ENCODE measurements at regions of chr17 and their contacts with region 1.

Region 1: DNA sequence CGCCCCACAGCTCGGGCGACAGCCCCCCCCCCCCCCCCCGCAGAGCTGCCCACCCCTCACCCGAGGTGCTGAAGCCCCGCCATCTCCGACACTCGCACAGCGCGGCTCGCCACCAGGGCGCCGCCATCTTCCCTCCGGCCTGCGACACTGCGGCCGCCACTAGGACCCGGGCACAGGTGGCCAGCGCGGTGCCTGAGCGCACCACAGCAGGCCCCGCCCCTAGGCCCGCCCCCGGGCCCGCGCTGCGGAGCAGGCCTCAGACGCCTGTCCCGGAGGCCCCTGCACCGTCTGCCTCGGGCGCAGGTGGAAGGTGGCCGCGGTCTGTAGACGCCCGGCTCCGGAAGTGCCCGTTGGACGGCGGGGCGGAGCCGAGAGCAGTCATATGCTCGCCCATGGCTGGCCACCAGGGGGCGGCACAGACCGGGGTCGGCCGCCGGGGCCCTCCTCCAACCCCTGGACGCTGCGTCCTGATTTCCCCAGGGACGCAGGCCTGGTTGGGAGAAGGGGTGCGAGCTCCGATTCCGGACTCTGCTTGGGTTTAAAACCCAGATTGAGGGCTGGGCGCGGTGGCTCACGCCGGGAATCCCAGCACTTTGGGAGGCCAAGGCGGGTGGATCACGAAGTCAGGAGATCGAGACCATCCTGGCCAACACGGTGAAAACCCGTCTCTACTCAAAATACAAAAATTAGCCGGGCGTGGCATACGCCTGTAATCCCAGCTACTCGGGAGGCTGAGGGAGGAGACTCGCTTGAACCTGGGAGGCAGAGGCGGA is at the start of gene MRPL38:
- DNase-seq: peak; percentile 97 to 98
- H3K4me3 ChIP-seq: peak within 1 kb of the TSS; percentile 50 to 86 (median 72)
- H3K27ac ChIP-seq: peak within 1 kb of the TSS; percentile 84 to 97 (median 95)
- H3K4me1 ChIP-seq: peaks cover 28 to 37% of the 10 kb centered on the region in 2 donors
- H3K27me3 ChIP-seq: no peaks in the 10 kb centered on the region
- CTCF ChIP-seq: peak; percentile 94 to 100 (median 97)
- POLR2A ChIP-seq: peak in 1 of 2 donors; percentile 88
- total RNA-seq, gene MRPL38: 34.8 to 60.6 (median 50.3) TPM

Region 2: DNA sequence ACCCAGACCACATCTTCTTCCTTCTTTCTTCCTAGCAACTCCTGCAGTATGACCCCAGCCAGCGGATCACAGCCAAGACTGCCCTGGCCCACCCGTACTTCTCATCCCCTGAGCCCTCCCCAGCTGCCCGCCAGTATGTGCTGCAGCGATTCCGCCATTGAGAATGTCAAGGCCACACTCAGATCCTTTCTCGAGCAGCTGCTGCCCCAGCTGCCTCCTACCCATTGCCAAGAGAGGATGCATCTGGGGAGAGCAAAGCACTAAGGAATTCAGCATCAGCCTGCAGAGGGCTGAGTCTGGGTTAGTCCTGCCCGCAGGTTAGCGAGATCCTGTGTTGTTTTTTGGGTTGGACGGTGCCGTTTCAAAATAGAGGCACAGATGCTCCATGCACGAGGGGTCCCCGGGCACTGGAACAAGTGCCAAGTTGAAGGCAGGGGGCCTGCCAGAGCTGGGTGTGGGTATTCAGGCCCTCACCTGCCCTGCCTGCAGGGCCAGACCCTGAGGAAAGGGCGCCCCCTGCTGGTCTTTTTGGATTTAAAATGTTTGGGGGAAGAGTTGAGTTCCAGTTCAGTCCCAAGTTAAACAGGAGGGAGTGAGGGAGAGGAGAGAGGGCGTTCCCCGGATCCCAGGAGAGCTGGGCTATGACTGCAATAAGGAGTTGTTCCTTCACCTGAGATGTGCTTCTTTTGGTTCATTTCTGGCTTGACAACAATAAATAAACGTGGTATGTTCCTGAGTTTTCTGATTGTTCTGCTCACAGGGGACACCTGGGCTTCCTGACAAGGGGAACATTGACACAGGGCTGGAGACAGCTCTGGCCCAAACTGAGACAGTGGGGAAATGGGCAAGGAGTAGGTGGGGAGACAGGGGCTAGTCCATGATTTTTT is 100.6 kb after region 1 on chr17:
- intact Hi-C with region 1: loop called (anchors 5 kb)
- DNase-seq: peak; percentile 60 to 73
- H3K4me3 ChIP-seq: no peak overlapping the region
- H3K27ac ChIP-seq: no peak overlapping the region
- H3K4me1 ChIP-seq: no peaks in the 10 kb centered on the region
- H3K27me3 ChIP-seq: no peaks in the 10 kb centered on the region
- CTCF ChIP-seq: peak; percentile 46 to 63 (median 56)
- POLR2A ChIP-seq: no peak

Region 3: DNA sequence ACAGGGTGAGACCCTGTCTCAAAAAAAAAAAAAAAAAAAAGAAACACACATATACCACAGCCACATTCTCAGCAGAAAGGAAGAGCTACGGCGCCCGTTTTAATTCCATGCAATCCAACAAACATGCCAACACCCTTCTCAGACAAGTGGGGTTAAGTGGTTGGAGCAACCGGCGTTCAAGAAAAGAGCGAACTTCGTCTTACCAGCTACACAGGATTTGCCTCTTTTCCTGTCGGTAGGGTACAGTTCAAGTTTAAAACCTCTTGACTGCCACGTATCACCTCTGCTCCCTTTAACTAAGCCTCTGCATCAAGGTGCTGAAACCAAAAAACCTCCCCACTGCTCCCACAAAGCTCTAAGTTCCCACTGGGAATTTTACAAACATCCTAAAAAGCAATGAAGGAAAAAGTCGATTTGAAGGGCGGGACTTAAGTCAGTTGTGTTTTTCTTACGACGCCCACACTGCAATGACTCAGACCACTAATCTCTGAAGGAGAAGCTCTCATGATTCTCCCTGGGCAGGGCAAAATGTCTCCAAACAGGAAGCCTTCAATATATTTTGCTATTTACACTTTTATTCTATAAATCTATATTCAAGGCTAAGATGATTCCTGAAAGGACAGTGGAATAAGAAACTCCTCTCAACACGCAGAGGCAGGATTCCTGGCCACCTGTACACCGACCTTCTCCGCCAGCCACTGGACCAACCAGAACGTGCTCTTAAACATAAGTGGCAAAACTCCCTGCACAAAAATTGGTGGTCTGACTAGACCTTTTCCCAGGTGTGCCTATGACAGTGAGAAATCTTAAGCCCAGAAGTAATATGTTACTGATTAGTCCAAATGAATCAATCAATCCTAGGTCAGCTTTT is 148.5 kb after region 1 on chr17:
- intact Hi-C with region 1: no loop called
- DNase-seq: peak; percentile 68 to 77
- H3K4me3 ChIP-seq: peak overlapping the region in 1 of 3 donors; percentile 10
- H3K27ac ChIP-seq: peak overlapping the region; percentile 78 to 96 (median 92)
- H3K4me1 ChIP-seq: peaks cover 44 to 49% of the 10 kb centered on the region in 2 donors
- H3K27me3 ChIP-seq: no peaks in the 10 kb centered on the region
- CTCF ChIP-seq: no peak
- POLR2A ChIP-seq: no peak

Measured in thyroid gland (tissue), 4 donors.